ENCODE measurements at regions of chr11 and their contacts with region 1.

Region 1: GRCh38 chr11:78784321-78785061 is 209.8 kb upstream of the NARS2 start:
- DNase-seq: no peak
- H3K4me3 ChIP-seq: no peak overlapping the region
- H3K27me3 ChIP-seq: no peaks in the 10 kb centered on the region
- CTCF ChIP-seq: no peak

Region 2: GRCh38 chr11:78798660-78799059 is 14.2 kb after region 1 on chr11:
- CTCF ChIA-PET with region 1: interaction called, 24 read pairs
- POLR2A ChIA-PET with region 1: no interaction called
- DNase-seq: no peak
- H3K4me3 ChIP-seq: no peak overlapping the region
- H3K27me3 ChIP-seq: no peaks in the 10 kb centered on the region
- CTCF ChIP-seq: peak; percentile 88

Measured in BJ (cell line).